ENCODE measurements at regions of chr9 and their contacts with region 1.

Region 1: GRCh38 chr9:114968671-114969070 is 38.3 kb upstream of the TNFSF8 start:
- DNase-seq: peak; percentile 48
- H3K4me3 Mint-ChIP-seq: no peak overlapping the region
- H3K27ac Mint-ChIP-seq: peak overlapping the region; percentile 3
- H3K4me1 Mint-ChIP-seq: peaks cover 34% of the 10 kb centered on the region
- H3K27me3 Mint-ChIP-seq: no peaks in the 10 kb centered on the region

Region 2: DNA sequence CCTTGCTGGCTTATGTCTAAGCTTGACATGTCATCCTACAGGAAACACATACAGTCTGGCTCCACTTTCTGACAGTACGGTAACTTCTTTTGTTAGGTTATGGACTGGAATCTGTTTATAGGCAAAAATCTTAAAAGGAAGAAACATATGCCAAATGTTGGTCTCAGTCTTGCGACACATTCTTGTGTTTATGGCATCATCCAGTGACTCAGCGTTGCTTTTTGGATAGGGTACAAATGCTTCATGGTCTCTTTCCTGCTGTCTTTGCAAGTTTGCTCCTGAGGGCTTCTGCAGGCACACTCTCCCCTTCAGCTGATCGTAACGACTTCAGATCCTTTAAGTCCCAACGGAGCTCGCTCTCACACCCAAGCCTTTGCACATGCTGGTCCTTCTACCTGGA is 14.8 kb before region 1 on chr9:
- CTCF ChIA-PET with region 1: interaction called, 5 read pairs
- intact Hi-C with region 1: loop called (anchors 1 kb)
- DNase-seq: peak; percentile 62
- H3K4me3 Mint-ChIP-seq: no peak overlapping the region
- H3K27ac Mint-ChIP-seq: peak overlapping the region; percentile 8
- H3K4me1 Mint-ChIP-seq: peaks cover 33% of the 10 kb centered on the region
- H3K27me3 Mint-ChIP-seq: no peaks in the 10 kb centered on the region

Region 3: GRCh38 chr9:115182264-115182663 is 213.6 kb after region 1 on chr9:
- CTCF ChIA-PET with region 1: no interaction called
- intact Hi-C with region 1: no loop called
- DNase-seq: no peak
- H3K4me3 Mint-ChIP-seq: no peak overlapping the region
- H3K27ac Mint-ChIP-seq: no peak overlapping the region
- H3K4me1 Mint-ChIP-seq: no peaks in the 10 kb centered on the region
- H3K27me3 Mint-ChIP-seq: peaks cover 3% of the 10 kb centered on the region